ENCODE measurements at regions of chr17 and their contacts with region 1.

Region 1: DNA sequence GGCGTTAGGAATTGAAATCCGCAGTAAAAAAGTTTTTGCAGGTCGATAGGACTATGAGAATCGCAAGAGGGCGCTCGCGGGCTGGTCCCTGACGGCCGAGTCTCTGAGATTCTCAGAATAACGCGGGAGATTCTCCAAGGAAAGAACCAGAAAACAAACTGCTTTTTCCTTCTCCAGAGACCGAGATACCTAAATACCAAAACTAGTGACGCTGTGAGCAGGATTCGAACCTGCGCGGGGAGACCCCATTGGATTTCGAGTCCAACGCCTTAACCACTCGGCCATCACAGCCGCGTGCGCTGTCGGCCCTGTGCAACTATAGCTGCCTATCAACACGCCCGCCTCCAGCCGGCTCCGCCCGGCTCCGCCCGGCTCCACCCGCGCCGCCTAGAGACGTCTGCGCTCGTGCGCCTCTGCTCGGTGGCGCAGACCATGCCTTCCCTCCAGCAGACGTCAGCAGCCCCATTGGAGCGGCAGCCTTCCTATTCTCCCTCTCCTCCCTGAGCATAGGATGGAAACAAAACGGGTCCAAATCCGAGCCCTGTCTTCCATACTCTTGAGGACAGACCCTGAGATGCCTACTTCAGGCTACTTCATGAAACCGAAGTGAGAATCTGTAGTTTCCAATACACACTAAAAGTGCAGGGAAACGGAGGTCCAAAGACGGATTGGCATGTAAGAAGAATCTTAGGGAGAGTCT is 13.4 kb downstream of the PER1 start:
- DNase-seq: peak; percentile 97
- H3K4me3 Mint-ChIP-seq: no peak overlapping the region
- H3K27ac Mint-ChIP-seq: no peak overlapping the region
- H3K4me1 Mint-ChIP-seq: peaks cover 10% of the 10 kb centered on the region
- H3K27me3 Mint-ChIP-seq: peaks cover 15% of the 10 kb centered on the region

Region 2: DNA sequence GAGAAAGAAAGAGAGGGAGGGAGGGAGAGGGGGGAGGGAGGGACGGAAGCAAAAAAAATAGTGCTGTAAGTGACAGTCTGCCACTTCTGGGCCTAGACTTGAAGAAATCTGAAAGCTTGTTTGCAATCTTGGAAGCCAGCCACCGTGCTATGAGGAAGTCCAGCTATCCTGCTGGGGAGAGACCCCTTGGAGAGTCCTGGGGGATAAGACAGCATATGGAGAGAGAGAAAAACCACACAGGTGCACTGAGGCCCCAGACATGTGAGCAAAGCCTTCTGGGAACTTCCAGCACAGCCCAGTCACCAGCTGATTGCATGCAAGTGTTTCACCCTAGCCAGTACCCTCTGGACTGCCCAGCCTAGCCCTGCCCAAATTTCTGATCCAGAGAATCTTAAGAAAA is 38.7 kb before region 1 on chr17:
- CTCF ChIA-PET with region 1: no interaction called
- DNase-seq: no peak
- H3K4me3 Mint-ChIP-seq: no peak overlapping the region
- H3K27ac Mint-ChIP-seq: no peak overlapping the region
- H3K4me1 Mint-ChIP-seq: peaks cover 5% of the 10 kb centered on the region
- H3K27me3 Mint-ChIP-seq: peaks cover 48% of the 10 kb centered on the region

Region 3: DNA sequence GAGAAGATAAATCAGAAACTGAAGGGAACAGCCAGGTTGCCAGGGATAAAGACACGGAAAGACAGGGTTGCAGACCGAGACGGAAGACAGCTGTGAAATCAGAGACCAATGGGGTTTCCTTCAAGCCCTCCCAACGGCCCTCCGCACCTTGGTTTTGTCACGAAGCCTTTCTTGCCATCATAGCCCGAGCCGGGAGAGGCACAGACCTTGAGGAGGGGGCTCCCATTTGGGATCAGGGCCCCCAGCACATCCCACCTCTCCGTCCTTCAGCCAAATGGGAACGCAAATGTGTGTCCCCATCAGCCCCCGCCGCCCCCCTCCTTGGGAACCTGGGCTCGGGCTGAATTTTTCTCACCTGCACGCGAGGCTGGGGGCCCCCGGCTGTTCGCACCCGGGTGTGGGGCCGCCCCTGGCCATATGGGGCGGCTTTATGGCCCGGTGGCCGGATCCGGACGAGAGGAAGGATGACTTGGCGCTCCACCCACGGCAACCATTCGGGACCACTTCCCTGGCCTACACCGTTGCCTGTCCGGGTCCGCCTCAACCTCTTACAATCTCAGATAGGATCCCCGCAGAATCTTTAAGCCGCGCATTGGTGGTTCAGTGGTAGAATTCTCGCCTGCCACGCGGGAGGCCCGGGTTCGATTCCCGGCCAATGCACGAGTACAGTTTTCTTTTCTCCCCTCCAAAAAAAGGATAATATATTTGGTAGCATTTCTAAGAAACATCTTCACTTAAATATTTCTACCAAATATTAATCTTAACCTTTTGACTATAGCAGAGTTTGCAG is 13.5 kb before region 1 on chr17:
- CTCF ChIA-PET with region 1: interaction called, 15 read pairs
- DNase-seq: peak; percentile 83
- H3K4me3 Mint-ChIP-seq: peak overlapping the region; percentile 93
- H3K27ac Mint-ChIP-seq: peak overlapping the region; percentile 84
- H3K4me1 Mint-ChIP-seq: peaks cover 61% of the 10 kb centered on the region
- H3K27me3 Mint-ChIP-seq: peaks cover 92% of the 10 kb centered on the region

Region 4: GRCh38 chr17:8151123-8151640 is 12.4 kb after region 1 on chr17:
- CTCF ChIA-PET with region 1: interaction called, 40 read pairs
- DNase-seq: peak; percentile 94
- H3K4me3 Mint-ChIP-seq: peak overlapping the region; percentile 89
- H3K27ac Mint-ChIP-seq: peak overlapping the region; percentile 90
- H3K4me1 Mint-ChIP-seq: peaks cover 35% of the 10 kb centered on the region
- H3K27me3 Mint-ChIP-seq: no peaks in the 10 kb centered on the region

Region 5: GRCh38 chr17:8156246-8156992 is 17.6 kb after region 1 on chr17:
- CTCF ChIA-PET with region 1: interaction called, 40 read pairs
- DNase-seq: peak; percentile 100
- H3K4me3 Mint-ChIP-seq: no peak overlapping the region
- H3K27ac Mint-ChIP-seq: no peak overlapping the region
- H3K4me1 Mint-ChIP-seq: peaks cover 53% of the 10 kb centered on the region
- H3K27me3 Mint-ChIP-seq: no peaks in the 10 kb centered on the region

Region 6: DNA sequence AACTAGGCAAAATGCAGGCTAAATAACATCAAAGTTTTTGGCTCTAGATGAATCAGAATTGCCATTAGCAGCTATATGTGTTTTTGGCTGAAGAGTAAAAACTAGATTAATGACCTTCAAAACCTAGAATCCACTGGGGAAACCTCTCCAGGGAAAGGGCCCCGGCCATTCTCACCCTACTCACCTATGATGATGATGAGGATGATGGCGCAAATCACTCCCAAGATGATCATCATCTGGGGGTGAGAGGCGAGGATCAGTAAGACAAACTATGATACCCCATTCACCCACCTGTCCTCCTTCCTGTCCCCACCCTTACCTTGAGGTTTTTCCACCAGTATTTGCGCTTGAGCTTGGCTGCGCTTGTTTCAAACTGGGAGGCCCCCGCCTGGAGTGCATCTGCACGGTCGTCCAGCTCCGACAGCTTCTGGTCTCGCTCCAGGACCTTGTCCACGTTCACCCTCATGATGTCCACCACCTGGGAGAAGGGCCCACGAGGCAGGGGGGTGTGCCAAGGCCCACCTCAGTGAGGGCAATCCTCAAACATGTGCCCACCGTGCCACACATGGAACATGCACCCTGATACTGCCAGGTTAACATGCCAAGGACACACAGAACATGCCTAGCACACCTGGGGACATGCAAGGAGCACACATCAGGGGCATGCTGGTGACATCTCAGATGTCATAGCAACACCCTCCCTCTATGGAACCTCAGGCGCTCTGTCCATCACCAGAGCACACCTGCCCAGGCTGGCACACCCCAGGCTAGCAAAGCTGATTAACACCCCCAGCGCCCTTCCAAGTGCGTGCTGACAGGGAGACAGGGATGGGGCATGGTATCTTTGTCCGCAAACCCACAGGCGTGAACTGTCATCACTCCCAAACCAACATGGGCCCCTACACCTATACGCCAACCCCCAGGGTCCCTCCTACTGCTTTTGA is 22.7 kb after region 1 on chr17:
- CTCF ChIA-PET with region 1: interaction called, 40 read pairs
- DNase-seq: no peak
- H3K4me3 Mint-ChIP-seq: peak overlapping the region; percentile 86
- H3K27ac Mint-ChIP-seq: peak overlapping the region; percentile 96
- H3K4me1 Mint-ChIP-seq: peaks cover 64% of the 10 kb centered on the region
- H3K27me3 Mint-ChIP-seq: no peaks in the 10 kb centered on the region